ENCODE measurements at regions of chr12 and their contacts with region 1.

Region 1: DNA sequence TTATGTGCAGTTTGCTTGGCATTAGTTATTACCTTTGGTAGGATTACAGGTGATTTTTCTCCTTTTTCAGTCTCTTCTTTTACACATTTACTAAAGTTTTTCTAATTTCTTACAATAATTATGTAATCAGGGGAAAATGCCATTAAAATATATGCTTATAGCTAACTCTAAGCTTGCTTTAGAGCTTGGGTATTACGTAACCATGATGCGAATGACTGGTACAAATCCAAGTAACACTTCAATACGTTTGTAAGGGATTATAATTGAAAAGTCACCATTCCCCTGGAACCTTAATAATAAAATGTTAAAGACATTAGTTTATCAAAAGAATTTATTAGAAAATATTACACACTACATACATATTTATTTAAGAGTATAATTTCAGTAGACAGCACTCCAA is 71.6 kb downstream of the SCAF11 start:
- DNase-seq: no peak
- H3K4me3 ChIP-seq: no peak overlapping the region
- CTCF ChIP-seq: no peak

Region 2: GRCh38 chr12:45959728-45960127 is 40.9 kb after region 1 on chr12:
- in situ Hi-C with region 1: loop called (anchors 5 kb)
- DNase-seq: no peak
- H3K4me3 ChIP-seq: no peak overlapping the region
- CTCF ChIP-seq: no peak

Measured in astrocyte of the cerebellum (primary cell).